ENCODE measurements at regions of chr14 and their contacts with region 1.

Region 1: DNA sequence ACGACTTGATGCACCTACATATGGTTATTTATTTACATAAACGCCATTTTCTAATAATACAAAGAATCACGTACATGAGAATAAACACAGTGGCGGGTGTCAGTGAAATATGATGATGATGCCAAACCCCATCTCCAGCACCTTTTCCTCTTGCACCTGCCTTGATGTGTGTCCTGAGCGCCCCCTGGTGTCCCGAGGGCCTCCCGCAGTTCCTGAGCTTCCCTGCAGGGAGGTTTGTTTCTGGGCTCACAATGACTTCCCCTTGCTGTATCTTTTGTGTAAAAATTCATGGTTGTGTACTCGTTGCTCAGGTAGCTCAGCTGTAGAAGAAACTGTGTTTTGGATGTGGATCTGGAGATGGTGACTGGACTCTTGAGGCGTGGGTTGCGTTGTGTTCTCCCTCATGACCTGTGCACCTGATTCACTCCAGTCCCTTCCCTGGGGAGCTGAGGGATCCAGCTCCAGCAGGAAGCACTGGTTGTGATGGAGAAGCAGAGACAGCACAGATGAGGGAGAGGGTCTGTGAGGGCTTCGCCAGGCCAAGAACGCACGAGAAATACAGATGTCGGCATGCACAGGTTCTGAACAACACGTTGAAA is 1037.8 kb downstream of the TMEM121 start:
- DNase-seq: peak; percentile 85
- ATAC-seq: peak; percentile 80
- H3K4me3 Mint-ChIP-seq: no peak overlapping the region
- H3K27ac Mint-ChIP-seq: no peak overlapping the region
- H3K4me1 Mint-ChIP-seq: no peaks in the 10 kb centered on the region
- H3K27me3 Mint-ChIP-seq: peaks cover 12% of the 10 kb centered on the region
- CTCF ChIP-seq: peak; percentile 97

Region 2: DNA sequence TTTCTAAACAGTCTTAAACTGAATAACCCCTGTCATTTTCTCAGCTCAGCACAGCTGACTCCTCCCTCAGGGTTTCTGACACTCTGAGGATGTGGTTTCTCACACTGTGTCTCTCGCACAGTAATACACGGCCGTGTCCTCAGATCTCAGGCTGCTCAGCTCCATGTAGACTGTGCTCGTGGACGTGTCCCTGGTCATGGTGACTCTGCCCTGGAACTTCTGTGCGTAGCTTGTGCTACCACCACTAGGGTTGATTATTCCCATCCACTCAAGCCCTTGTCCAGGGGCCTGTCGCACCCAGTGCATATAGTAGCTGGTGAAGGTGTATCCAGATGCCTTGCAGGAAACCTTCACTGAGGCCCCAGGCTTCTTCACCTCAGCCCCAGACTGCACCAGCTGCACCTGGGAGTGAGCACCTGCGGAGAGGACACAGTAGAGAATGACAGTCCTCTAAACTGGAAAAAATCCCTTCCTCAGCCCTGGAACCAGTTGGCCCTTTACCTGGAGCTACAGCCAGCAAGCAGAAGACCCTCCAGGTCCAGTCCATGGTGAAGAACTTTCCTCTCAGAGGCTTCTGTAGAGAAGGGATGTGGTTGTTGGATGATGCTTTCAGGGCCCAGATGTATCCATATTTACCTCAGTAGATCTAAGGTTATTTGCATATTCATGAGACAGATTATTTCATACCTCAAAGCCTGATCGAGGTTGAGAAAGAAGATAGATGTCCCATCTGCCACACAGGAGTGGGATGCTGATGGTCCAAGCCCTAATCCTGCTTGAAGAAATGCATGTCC is 53.0 kb before region 1 on chr14:
- CTCF ChIA-PET with region 1: interaction called, 10 read pairs
- POLR2A ChIA-PET with region 1: no interaction called
- intact Hi-C with region 1: no loop called
- DNase-seq: peak; percentile 71
- ATAC-seq: peak; percentile 68
- H3K4me3 Mint-ChIP-seq: peak overlapping the region; percentile 18
- H3K27ac Mint-ChIP-seq: peak overlapping the region; percentile 62
- H3K4me1 Mint-ChIP-seq: peaks cover 68% of the 10 kb centered on the region
- H3K27me3 Mint-ChIP-seq: no peaks in the 10 kb centered on the region
- CTCF ChIP-seq: no peak

Region 3: DNA sequence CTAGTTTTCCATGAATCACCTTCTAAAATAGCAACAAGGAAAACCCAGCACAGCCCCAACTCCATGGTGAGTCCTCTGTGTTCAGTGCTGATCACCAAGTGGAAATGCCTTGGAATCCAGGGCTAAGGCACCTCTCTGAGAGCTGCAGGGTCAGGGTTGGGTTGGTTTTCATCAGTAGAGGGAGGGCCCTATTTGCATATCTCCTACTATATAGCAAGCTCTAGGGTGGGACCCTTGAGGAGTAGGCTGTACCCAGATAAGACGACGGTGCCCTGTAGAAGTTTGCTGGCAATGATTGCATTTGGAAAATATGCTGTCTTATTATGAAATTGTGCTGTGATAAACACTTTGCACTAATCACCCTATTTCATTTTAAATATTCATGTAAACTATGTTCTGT is 26.0 kb before region 1 on chr14:
- CTCF ChIA-PET with region 1: interaction called, 14 read pairs
- POLR2A ChIA-PET with region 1: no interaction called
- intact Hi-C with region 1: no loop called
- DNase-seq: no peak
- ATAC-seq: no peak
- H3K4me3 Mint-ChIP-seq: no peak overlapping the region
- H3K27ac Mint-ChIP-seq: no peak overlapping the region
- H3K4me1 Mint-ChIP-seq: peaks cover 12% of the 10 kb centered on the region
- H3K27me3 Mint-ChIP-seq: peaks cover 23% of the 10 kb centered on the region
- CTCF ChIP-seq: no peak

Region 4: GRCh38 chr14:106551263-106551662 is 12.9 kb before region 1 on chr14:
- CTCF ChIA-PET with region 1: interaction called, 26 read pairs
- POLR2A ChIA-PET with region 1: no interaction called
- intact Hi-C with region 1: no loop called
- DNase-seq: peak; percentile 26
- ATAC-seq: no peak
- H3K4me3 Mint-ChIP-seq: no peak overlapping the region
- H3K27ac Mint-ChIP-seq: no peak overlapping the region
- H3K4me1 Mint-ChIP-seq: peaks cover 9% of the 10 kb centered on the region
- H3K27me3 Mint-ChIP-seq: peaks cover 2% of the 10 kb centered on the region
- CTCF ChIP-seq: no peak

Region 5: DNA sequence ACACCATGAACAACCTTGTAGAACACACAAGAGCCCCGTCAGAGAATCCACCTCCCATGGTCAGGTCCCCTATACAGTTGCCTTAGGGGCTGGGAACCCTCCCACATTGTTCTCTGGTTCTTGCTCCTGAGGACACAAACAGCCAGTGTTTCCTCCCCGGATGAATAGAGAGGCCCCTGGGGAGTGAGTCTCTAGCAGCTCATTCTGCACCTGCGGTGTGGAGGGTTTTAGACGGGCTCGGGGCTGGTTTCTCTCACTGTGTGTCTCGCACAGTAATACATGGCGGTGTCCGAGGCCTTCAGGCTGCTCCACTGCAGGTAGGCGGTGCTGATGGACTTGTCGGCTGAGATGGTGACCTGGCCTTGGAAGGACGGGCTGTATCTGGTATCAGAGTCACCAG is 14.3 kb after region 1 on chr14:
- CTCF ChIA-PET with region 1: interaction called, 26 read pairs
- POLR2A ChIA-PET with region 1: no interaction called
- intact Hi-C with region 1: no loop called
- DNase-seq: no peak
- ATAC-seq: no peak
- H3K4me3 Mint-ChIP-seq: no peak overlapping the region
- H3K27ac Mint-ChIP-seq: no peak overlapping the region
- H3K4me1 Mint-ChIP-seq: no peaks in the 10 kb centered on the region
- H3K27me3 Mint-ChIP-seq: peaks cover 4% of the 10 kb centered on the region
- CTCF ChIP-seq: no peak

Region 6: DNA sequence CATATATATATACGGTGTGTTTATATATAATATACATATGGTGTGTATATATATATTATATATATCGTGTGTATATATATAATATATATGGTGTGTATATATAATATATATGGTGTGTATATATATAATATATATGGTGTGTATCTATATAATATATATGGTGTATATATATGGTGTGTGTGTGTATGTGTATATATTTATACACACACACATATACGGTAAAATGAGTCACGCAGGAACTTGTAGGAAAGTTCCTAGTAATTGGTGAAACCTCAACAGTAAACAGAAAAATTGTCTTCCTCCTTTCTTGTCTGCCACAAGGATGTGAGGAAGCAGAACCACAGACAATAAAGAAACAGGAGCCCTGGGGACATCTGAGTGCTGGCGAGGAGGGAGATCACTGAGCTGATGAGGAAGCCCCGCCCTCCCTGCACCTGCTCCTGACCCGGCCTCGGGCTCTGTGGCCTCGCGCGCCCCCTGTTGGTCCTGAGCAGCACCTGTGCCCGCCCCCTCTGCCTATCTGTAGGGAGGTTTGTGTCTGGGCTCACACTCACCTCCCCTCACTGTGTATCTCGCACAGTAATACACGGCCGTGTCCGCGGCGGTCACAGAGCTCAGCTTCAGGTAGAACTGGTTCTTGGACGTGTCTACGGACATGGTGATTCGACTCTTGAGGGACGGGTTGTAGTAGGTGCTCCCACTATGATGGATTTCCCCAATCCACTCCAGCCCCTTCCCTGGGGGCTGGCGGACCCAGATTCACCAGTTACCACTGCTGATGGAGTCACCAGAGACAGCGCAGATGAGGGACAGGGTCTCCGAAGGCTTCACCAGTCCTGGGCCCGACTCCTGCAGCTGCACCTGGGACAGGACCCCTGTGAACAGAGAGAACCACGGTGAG is 41.6 kb after region 1 on chr14:
- CTCF ChIA-PET with region 1: interaction called, 15 read pairs
- POLR2A ChIA-PET with region 1: no interaction called
- intact Hi-C with region 1: no loop called
- DNase-seq: peak; percentile 94
- ATAC-seq: peak; percentile 100
- H3K4me3 Mint-ChIP-seq: no peak overlapping the region
- H3K27ac Mint-ChIP-seq: no peak overlapping the region
- H3K4me1 Mint-ChIP-seq: no peaks in the 10 kb centered on the region
- H3K27me3 Mint-ChIP-seq: peaks cover 20% of the 10 kb centered on the region
- CTCF ChIP-seq: peak; percentile 75